ENCODE measurements at regions of chr6 and their contacts with region 1.

Region 1: DNA sequence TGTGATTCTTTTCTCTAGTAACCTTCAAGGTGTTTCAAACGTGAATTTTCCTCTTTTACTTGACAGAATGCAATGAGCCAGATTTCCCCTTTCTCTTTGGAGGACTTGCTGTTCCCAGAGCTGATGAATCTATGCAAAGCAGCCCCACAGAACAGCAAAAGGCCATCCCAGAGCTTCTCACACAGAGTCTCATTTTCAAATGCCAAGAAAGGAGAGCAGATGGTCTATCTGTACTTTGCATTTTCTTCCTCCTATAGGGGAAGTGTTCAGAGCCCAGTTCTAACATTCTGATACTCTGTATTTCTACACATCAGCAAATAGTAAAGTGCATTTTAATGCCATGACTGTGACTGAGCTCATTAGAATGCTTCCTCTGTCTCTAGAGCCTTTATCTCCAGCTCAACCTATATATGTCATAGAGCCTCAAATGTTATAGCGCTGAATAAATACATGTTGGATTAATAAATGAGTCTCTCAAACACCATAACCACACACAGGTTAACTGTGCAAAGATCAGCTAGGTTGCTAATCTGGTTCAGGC is 81.8 kb upstream of the EYA4 start:
- DNase-seq: no peak
- ATAC-seq: no peak
- H3K4me3 ChIP-seq: no peak overlapping the region
- H3K27ac ChIP-seq: no peak overlapping the region
- H3K4me1 ChIP-seq: no peaks in the 10 kb centered on the region
- H3K27me3 ChIP-seq: no peaks in the 10 kb centered on the region
- CTCF ChIP-seq: no peak
- POLR2A ChIP-seq: no peak

Region 2: GRCh38 chr6:132569170-132569569 is 590.2 kb before region 1 on chr6:
- intact Hi-C with region 1: loop called in 1 of 10 experiments (anchors 10 kb)
- DNase-seq: no peak
- ATAC-seq: no peak
- H3K4me3 ChIP-seq: no peak overlapping the region
- H3K27ac ChIP-seq: no peak overlapping the region
- H3K4me1 ChIP-seq: no peaks in the 10 kb centered on the region
- H3K27me3 ChIP-seq: peaks cover 0 to 31% (median 9%) of the 10 kb centered on the region in 9 donors
- CTCF ChIP-seq: no peak
- POLR2A ChIP-seq: no peak

Region 3: GRCh38 chr6:133306931-133307330 is 147.6 kb after region 1 on chr6:
- intact Hi-C with region 1: no loop called
- DNase-seq: no peak
- ATAC-seq: no peak
- H3K4me3 ChIP-seq: no peak overlapping the region
- H3K27ac ChIP-seq: no peak overlapping the region
- H3K4me1 ChIP-seq: no peaks in the 10 kb centered on the region
- H3K27me3 ChIP-seq: no peaks in the 10 kb centered on the region
- CTCF ChIP-seq: no peak
- POLR2A ChIP-seq: no peak

Measured in heart left ventricle (tissue), 16 donors.